WTC11 (cell line): ENCODE measurements at regions of chr10 and their contacts with region 1.

Region 1: GRCh38 chr10:102225646-102226541 is at the start of gene ELOVL3:
- DNase-seq: peak; percentile 96
- ATAC-seq: peak; percentile 92
- H3K4me3 Mint-ChIP-seq: peak within 1 kb of the TSS; percentile 56
- H3K27ac Mint-ChIP-seq: no peak within 1 kb of the TSS
- H3K4me1 Mint-ChIP-seq: peaks cover 8% of the 10 kb centered on the region; the same call in 1 of the 2 replicates
- H3K27me3 Mint-ChIP-seq: peaks cover 96% of the 10 kb centered on the region
- CTCF ChIP-seq: no peak
- total RNA-seq, gene ELOVL3: 0.17 to 0.46 TPM (median 0.34 TPM) in 3 replicates

Region 2: GRCh38 chr10:102120142-102120990 is 105.5 kb before region 1 on chr10 and contains the start of gene LDB1:
- CTCF ChIA-PET with region 1: no interaction called
- POLR2A ChIA-PET with region 1: no interaction called
- DNase-seq: peak; percentile 75
- ATAC-seq: peak; percentile 9
- H3K4me3 Mint-ChIP-seq: peak within 1 kb of the TSS; percentile 84
- H3K27ac Mint-ChIP-seq: peak within 1 kb of the TSS; percentile 98
- H3K4me1 Mint-ChIP-seq: peaks cover 62% of the 10 kb centered on the region
- H3K27me3 Mint-ChIP-seq: no peaks in the 10 kb centered on the region
- CTCF ChIP-seq: no peak
- total RNA-seq, gene LDB1: 89.1 to 100 TPM (median 94.2 TPM) in 3 replicates

Region 3: DNA sequence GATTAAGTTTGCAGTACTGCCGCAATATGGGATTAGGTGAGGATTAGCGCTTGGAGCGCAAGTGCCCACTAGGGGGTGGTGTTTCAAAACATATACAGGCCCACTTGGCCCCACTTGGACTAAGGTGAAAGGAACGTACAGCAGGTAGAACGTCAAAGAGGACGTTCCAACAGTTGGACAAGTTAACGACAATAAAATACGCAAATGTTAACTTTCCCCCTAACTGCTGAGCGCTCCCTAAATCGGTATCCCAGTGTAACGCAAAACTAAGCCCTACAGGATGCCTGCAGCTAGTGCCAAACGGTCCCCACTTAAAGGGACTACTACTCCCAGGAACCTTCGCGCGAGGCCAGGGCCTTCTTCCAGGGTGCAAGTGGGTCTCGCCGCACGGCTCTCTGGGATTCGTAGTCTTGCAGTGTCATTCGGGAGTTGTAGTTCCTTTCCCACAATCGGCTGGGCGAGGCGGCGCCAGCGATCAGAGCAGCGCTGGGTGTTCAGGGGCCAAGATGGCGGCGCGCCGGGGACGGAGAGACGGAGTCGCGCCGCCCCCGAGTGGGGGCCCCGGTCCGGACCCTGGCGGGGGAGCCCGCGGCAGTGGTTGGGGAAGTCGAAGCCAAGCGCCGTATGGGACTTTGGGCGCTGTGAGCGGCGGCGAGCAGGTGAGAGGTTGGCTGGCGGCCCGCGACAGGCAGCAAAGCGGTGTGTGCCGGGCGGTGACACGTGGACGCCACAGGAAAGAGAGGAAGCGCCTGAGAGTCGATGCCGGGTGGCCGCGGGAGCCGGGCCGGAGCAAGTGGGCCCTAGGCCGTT is 93.1 kb before region 1 on chr10 and contains the start of gene PPRC1:
- CTCF ChIA-PET with region 1: no interaction called
- POLR2A ChIA-PET with region 1: no interaction called
- DNase-seq: peak; percentile 98
- ATAC-seq: peak; percentile 95
- H3K4me3 Mint-ChIP-seq: peak within 1 kb of the TSS; percentile 89
- H3K27ac Mint-ChIP-seq: peak within 1 kb of the TSS; percentile 98
- H3K4me1 Mint-ChIP-seq: peaks cover 22% of the 10 kb centered on the region
- H3K27me3 Mint-ChIP-seq: peaks cover 4% of the 10 kb centered on the region; the same call in 1 of the 2 replicates
- CTCF ChIP-seq: peak; percentile 86
- total RNA-seq, gene PPRC1: 68.0 to 79.4 TPM (median 69.7 TPM) in 3 replicates

Region 4: GRCh38 chr10:102167861-102168260 is 58.0 kb before region 1 on chr10:
- CTCF ChIA-PET with region 1: interaction called, 102 read pairs
- POLR2A ChIA-PET with region 1: interaction called, 3 read pairs
- DNase-seq: no peak
- ATAC-seq: no peak
- H3K4me3 Mint-ChIP-seq: no peak overlapping the region
- H3K27ac Mint-ChIP-seq: no peak overlapping the region
- H3K4me1 Mint-ChIP-seq: peaks cover 8% of the 10 kb centered on the region
- H3K27me3 Mint-ChIP-seq: peaks cover 8% of the 10 kb centered on the region
- CTCF ChIP-seq: no peak

Region 5: GRCh38 chr10:102254426-102254825 is 28.5 kb after region 1 on chr10:
- CTCF ChIA-PET with region 1: interaction called, 22 read pairs
- POLR2A ChIA-PET with region 1: interaction called, 3 read pairs
- DNase-seq: no peak
- ATAC-seq: no peak
- H3K4me3 Mint-ChIP-seq: no peak overlapping the region
- H3K27ac Mint-ChIP-seq: no peak overlapping the region
- H3K4me1 Mint-ChIP-seq: no peaks in the 10 kb centered on the region
- H3K27me3 Mint-ChIP-seq: no peaks in the 10 kb centered on the region
- CTCF ChIP-seq: no peak

Region 6: GRCh38 chr10:102322914-102323313 is 97.0 kb after region 1 on chr10:
- CTCF ChIA-PET with region 1: interaction called, 21 read pairs
- POLR2A ChIA-PET with region 1: no interaction called
- DNase-seq: no peak
- ATAC-seq: no peak
- H3K4me3 Mint-ChIP-seq: no peak overlapping the region
- H3K27ac Mint-ChIP-seq: no peak overlapping the region
- H3K4me1 Mint-ChIP-seq: peaks cover 6% of the 10 kb centered on the region
- H3K27me3 Mint-ChIP-seq: no peaks in the 10 kb centered on the region; the same call in 1 of the 2 replicates
- CTCF ChIP-seq: no peak

Region 7: GRCh38 chr10:102358712-102359382 is 133.0 kb after region 1 on chr10:
- CTCF ChIA-PET with region 1: interaction called, 906 read pairs
- POLR2A ChIA-PET with region 1: no interaction called
- DNase-seq: no peak
- ATAC-seq: no peak
- H3K4me3 Mint-ChIP-seq: no peak overlapping the region
- H3K27ac Mint-ChIP-seq: no peak overlapping the region
- H3K4me1 Mint-ChIP-seq: no peaks in the 10 kb centered on the region
- H3K27me3 Mint-ChIP-seq: no peaks in the 10 kb centered on the region
- CTCF ChIP-seq: no peak

Region 8: GRCh38 chr10:102394079-102394800 is 168.3 kb after region 1 on chr10:
- CTCF ChIA-PET with region 1: interaction called, 115 read pairs
- POLR2A ChIA-PET with region 1: no interaction called
- DNase-seq: peak; percentile 93
- ATAC-seq: peak; percentile 81
- H3K4me3 Mint-ChIP-seq: peak overlapping the region; percentile 75
- H3K27ac Mint-ChIP-seq: peak overlapping the region; percentile 12; the same call in 1 of the 2 replicates
- H3K4me1 Mint-ChIP-seq: peaks cover 18% of the 10 kb centered on the region
- H3K27me3 Mint-ChIP-seq: peaks cover 41% of the 10 kb centered on the region
- CTCF ChIP-seq: no peak; the same call in none of the 2 replicates

Region 9: DNA sequence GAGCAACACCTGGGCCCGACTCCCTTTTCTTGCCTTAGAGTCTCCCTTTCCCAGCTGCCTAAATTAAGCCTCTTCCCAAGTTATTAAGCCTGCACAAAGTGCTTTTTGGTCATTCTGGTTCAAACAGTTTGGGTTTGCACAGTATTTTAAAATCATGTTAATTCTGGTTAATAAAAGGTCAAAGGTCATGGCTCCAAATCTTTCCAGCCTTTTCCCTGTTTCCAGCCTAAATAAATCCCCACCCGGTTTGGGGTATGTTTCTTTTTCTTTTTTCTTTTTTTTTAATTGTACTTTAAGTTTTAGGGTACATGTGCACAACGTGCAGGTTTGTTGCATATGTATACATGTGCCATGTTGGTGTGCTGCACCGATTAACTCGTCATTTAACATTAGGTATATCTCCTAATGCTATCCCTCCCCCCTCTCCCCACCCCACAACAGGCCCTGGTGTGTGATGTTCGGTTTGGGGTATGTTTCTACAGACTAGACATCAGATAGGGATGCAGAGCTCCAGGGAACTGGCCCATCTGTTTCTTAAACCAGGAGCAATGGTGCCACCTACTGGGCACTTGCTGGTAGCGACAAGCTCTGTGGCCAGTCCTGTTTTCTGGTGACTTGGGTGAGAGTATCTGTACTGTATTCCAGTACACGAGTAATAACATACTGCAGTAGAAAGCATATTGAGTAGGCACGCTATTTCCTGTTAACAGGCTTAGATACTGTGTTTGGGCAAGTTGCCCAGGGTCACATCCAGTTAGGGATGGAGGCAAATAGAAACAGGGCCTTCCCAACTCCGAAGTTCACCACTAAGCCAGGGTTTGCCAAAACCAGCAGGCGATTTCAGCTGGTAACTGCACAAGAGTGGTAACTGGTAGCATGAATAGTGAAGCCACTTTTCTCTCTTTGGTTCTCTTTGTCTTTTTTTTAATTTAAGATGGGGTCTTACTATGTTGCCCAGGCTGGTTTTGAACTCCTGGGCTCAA is 357.8 kb after region 1 on chr10:
- CTCF ChIA-PET with region 1: interaction called, 24 read pairs
- POLR2A ChIA-PET with region 1: no interaction called
- DNase-seq: peak; percentile 91
- ATAC-seq: peak; percentile 92
- H3K4me3 Mint-ChIP-seq: no peak overlapping the region
- H3K27ac Mint-ChIP-seq: no peak overlapping the region
- H3K4me1 Mint-ChIP-seq: peaks cover 21% of the 10 kb centered on the region
- H3K27me3 Mint-ChIP-seq: no peaks in the 10 kb centered on the region; the same call in 1 of the 2 replicates
- CTCF ChIP-seq: peak; percentile 83